Sciatic nerve (tissue), 2 donors: ENCODE measurements at regions of chr14 and their contacts with region 1.

Region 1: DNA sequence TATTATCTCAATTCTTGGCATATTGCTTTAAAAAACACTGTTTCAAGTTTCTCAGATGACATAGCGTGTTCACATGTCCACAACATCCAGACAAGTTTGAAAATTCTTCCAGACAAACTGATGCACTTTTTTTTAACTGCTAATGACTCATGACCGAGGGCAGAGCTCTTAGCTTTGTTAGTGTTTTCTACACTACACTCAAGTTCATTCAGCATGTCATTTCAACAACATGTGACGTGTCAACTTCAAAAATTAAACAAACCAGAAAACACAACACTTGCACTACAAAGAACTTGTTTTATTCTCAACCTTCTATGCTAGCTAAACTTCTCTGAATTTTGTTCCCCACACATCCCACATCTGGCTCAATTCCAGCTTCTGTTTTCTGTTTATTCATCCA is 1186.3 kb upstream of the FLRT2 start:
- DNase-seq: no peak
- ATAC-seq: no peak

Region 2: GRCh38 chr14:82354126-82354525 is 1989.5 kb before region 1 on chr14:
- intact Hi-C with region 1: no loop called
- DNase-seq: no peak
- ATAC-seq: no peak

Region 3: GRCh38 chr14:84375235-84375634 is 31.6 kb after region 1 on chr14:
- intact Hi-C with region 1: loop called (anchors 2 kb)
- DNase-seq: no peak
- ATAC-seq: no peak